MCF 10A (cell line): ENCODE measurements at regions of chr18 and their contacts with region 1.

Region 1: DNA sequence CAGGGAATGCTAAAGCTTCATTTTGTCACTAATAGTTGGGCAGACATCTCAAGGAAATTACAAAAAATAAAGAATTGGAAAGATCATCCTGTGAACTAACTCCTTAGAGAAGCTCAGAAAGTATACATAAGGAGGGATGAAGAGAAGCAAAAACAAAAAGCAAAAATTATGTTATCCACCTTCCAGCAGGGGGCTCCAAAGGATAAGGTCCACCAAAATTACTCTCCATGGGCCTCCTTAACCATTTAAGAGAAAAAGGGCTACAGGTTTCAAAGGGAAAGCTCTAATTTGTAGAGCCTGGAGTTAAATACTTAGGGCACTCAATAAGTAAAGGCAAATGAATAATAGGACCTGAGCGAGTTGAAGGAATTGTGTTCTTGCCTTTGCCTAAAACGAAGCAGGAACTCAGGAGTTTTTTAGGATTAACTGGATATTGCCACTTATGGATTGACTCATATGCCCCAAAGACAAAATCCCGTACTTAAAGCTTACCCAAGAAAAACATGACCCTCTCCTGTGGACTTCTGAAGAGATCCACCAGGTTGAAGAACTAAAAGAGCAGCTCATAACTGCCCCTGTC is 1167.9 kb downstream of the DSC3 start:
- DNase-seq: peak; percentile 76
- H3K4me3 Mint-ChIP-seq: no peak overlapping the region
- H3K27ac Mint-ChIP-seq: no peak overlapping the region
- H3K4me1 Mint-ChIP-seq: no peaks in the 10 kb centered on the region
- H3K27me3 Mint-ChIP-seq: no peaks in the 10 kb centered on the region
- CTCF ChIP-seq: peak; percentile 70

Region 2: DNA sequence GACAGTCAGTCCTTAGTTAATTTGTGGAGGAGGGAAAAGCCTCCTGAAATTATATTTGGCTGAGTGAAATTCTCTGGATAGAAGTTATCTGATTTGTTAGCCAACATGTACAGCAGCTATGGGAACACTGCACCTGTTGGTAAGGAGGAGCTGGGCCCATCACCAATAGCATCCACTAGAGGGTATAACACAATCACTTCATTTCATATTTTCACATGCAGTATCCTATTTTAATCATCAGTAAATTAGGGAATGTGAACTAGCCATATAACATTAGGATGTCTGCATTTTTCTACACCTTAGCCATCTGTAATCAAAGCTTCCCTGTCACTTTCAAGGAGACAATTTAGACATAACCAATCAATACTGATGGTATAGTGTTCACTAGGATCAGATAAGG is 879.3 kb before region 1 on chr18:
- CTCF ChIA-PET with region 1: no interaction called
- POLR2A ChIA-PET with region 1: no interaction called
- intact Hi-C with region 1: loop called (anchors 1 kb)
- DNase-seq: peak; percentile 19
- H3K4me3 Mint-ChIP-seq: no peak overlapping the region
- H3K27ac Mint-ChIP-seq: no peak overlapping the region
- H3K4me1 Mint-ChIP-seq: no peaks in the 10 kb centered on the region
- H3K27me3 Mint-ChIP-seq: no peaks in the 10 kb centered on the region
- CTCF ChIP-seq: peak; percentile 25

Region 3: DNA sequence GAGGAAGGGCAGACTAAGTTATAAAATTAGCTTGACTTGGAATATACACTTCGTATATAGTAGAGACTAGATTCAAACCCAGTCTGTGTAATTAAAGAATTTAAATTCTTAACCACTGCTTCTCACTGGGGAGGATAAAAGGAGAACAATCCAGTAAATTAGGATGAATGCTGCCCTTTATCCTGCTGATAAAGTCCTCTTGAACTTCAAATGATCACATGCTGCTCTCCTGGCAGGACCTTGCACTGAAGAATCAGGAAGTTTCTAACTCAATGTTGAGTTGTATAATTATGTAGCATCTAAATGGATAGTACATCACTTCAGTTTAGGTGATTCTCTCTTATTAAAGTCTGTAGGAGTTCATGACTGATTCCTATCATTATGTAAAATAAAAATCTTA is 11.8 kb before region 1 on chr18:
- CTCF ChIA-PET with region 1: interaction called, 22 read pairs
- POLR2A ChIA-PET with region 1: no interaction called
- intact Hi-C with region 1: no loop called
- DNase-seq: no peak
- H3K4me3 Mint-ChIP-seq: no peak overlapping the region
- H3K27ac Mint-ChIP-seq: no peak overlapping the region
- H3K4me1 Mint-ChIP-seq: no peaks in the 10 kb centered on the region
- H3K27me3 Mint-ChIP-seq: no peaks in the 10 kb centered on the region
- CTCF ChIP-seq: no peak

Region 4: GRCh38 chr18:30280880-30281470 is 406.4 kb after region 1 on chr18:
- CTCF ChIA-PET with region 1: interaction called, 99 read pairs
- POLR2A ChIA-PET with region 1: no interaction called
- intact Hi-C with region 1: loop called (anchors 1 kb)
- DNase-seq: peak; percentile 71
- H3K4me3 Mint-ChIP-seq: no peak overlapping the region
- H3K27ac Mint-ChIP-seq: no peak overlapping the region
- H3K4me1 Mint-ChIP-seq: no peaks in the 10 kb centered on the region
- H3K27me3 Mint-ChIP-seq: no peaks in the 10 kb centered on the region
- CTCF ChIP-seq: peak; percentile 58

Region 5: DNA sequence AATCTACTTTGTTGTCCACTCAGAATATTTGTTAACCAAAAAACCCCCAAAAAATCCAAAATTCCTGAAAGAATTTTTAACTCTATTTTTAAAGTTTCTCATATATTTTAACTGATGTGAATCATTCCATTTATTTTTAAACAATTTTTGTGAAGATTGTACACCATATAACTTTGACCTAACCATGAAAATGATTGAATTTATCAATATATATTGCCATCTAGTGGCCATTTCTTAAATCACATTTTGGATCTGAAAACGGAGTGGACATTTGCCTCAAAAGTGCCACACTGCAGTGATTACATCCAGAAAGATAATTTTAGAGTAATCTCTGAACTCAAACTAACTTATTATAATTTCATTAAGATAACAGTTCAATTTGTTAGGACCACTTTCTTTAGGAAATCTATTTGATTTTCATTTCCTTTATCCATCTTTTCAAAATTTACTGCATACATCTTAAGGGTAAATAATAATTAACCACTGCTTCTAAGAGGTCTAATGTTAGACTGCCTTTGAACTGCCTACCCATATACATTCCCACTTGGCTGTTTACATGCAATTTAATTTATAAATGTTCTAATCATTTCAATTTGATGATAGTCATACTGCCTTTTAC is 1096.8 kb after region 1 on chr18:
- CTCF ChIA-PET with region 1: interaction called, 19 read pairs
- POLR2A ChIA-PET with region 1: no interaction called
- intact Hi-C with region 1: loop called (anchors 5 kb)
- DNase-seq: peak; percentile 52
- H3K4me3 Mint-ChIP-seq: no peak overlapping the region
- H3K27ac Mint-ChIP-seq: no peak overlapping the region
- H3K4me1 Mint-ChIP-seq: no peaks in the 10 kb centered on the region
- H3K27me3 Mint-ChIP-seq: no peaks in the 10 kb centered on the region
- CTCF ChIP-seq: peak; percentile 36